ENCODE measurements at regions of chr4 and their contacts with region 1.

Region 1: DNA sequence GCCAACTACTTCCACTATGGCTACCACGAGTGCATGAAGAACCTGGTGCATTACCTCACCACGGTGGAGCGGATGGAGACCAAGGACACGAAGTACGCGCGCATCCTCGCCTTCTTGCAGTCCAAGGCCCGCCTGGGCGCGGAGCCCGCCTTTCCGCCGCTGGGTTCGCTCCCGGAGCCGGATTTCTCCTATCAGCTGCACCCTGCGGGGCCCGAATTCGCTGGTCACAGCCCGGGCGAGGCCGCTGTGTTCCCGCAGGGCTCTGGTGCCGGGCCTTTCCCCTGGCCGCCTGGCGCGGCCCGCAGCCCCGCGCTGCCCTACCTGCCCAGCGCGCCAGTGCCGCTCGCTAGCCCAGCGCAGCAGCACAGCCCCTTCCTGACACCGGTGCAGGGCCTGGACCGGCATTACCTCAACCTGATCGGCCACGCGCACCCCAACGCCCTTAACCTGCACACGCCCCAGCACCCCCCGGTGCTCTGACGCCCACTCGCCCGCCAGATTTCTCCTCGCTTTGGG is 2.1 kb downstream of the HELT start:
- DNase-seq: peak in 1 of 2 donors; percentile 81
- H3K4me3 ChIP-seq: no peak overlapping the region
- CTCF ChIP-seq: no peak
- POLR2A ChIP-seq: no peak

Region 2: DNA sequence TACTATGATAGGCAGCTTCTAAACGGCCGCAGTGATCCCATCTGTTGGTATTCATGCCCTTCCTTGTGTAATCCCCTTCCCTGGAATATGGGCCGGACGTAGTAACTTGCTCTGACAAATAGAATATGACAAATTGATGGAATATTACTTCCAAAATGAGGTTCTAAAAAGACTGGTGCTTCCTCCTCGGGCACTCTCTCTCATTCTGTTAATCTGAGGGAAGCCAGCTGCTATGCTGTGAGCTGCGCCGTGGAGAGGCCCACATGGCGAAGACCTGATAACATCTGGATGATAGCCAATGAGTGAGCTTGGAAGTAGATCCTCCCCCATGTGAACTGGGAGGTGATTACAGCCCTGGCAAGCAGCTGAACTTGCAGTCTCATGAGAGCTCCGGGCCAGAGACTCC is 95.5 kb after region 1 on chr4:
- intact Hi-C with region 1: loop called (anchors 10 kb)
- DNase-seq: no peak
- H3K4me3 ChIP-seq: no peak overlapping the region
- CTCF ChIP-seq: no peak
- POLR2A ChIP-seq: no peak

Measured in lower leg skin (tissue), 4 donors.